Calu3 (cell line): ENCODE measurements at regions of chr18 and their contacts with region 1.

Region 1: DNA sequence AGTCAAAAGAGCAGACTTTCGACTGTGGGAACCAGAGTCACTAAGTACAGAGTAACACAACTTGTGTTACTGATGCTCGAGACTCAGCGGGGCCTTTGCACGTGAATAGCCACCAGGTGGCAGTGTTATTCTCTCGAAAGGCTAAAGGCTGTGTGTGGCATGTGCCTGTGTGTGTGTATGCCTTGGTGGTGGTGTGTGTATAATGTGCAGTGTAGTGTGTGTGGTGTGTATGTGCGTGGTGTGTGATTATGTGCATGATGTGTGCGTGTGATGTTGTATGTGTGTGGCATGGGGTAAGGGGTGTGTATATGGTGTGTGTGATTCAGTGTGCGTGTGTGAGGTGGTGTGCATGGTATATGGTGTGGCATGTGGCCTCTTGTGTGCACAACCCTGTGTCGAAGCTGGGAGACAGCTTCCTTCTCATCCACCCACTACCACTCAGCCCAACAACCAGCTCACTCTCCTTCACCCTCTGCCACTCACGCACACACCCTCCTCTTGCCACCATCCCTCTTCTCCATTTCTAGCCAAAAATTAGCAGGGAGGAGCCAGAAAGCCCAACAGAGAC is 83.0 kb upstream of the ZNF532 start:
- DNase-seq: peak; percentile 86
- H3K4me3 Mint-ChIP-seq: peak overlapping the region; percentile 3
- H3K27ac Mint-ChIP-seq: peak overlapping the region; percentile 67
- H3K4me1 Mint-ChIP-seq: peaks cover 51% of the 10 kb centered on the region
- H3K27me3 Mint-ChIP-seq: no peaks in the 10 kb centered on the region
- CTCF ChIP-seq: peak; percentile 96

Region 2: GRCh38 chr18:58748899-58749595 is 32.7 kb before region 1 on chr18:
- CTCF ChIA-PET with region 1: no interaction called
- intact Hi-C with region 1: no loop called
- DNase-seq: no peak
- H3K4me3 Mint-ChIP-seq: no peak overlapping the region
- H3K27ac Mint-ChIP-seq: no peak overlapping the region
- H3K4me1 Mint-ChIP-seq: no peaks in the 10 kb centered on the region
- H3K27me3 Mint-ChIP-seq: no peaks in the 10 kb centered on the region
- CTCF ChIP-seq: no peak

Region 3: DNA sequence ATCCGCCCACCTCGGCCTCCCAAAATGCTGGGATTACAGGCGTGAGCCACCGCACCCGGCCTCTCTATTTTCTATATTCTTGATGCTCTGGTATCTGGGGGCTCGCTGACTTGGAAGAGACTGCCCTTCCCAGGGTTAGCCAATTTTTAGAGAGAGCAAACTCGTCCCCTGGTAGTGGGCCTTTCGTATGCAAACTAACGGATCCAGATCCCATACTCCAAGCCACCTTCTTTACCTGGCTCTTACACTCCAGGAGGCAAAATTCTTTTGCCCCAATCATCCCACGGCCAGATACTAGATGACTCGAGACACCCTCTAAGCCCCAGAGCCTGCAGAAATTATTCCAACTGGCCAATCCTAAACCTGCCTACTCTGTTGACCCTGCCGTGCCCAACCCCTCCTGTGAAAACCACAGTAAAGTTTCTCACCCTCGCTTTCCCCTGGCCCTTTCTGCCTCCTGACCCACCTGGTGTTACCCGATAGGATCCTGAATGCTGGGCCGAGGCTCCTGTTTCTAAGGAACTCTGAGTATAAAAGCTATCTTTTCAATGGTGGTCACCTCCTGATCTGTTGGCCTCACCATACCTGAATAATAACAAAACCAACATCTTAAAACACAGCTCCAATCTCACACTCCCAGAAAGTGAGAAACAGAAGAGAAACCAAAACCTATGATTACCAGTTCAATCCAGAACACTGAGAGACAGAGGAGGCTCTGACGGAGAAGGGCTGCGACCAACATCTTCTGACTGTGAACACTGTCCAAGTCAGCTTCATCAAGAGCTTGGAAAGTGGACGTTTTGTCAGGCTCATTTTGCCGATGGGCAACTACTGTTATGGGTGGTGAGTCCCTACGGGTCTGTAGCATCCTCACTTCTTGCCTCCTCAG is 25.4 kb after region 1 on chr18:
- CTCF ChIA-PET with region 1: no interaction called
- intact Hi-C with region 1: no loop called
- DNase-seq: no peak
- H3K4me3 Mint-ChIP-seq: no peak overlapping the region
- H3K27ac Mint-ChIP-seq: no peak overlapping the region
- H3K4me1 Mint-ChIP-seq: peaks cover 11% of the 10 kb centered on the region
- H3K27me3 Mint-ChIP-seq: no peaks in the 10 kb centered on the region
- CTCF ChIP-seq: no peak

Region 4: DNA sequence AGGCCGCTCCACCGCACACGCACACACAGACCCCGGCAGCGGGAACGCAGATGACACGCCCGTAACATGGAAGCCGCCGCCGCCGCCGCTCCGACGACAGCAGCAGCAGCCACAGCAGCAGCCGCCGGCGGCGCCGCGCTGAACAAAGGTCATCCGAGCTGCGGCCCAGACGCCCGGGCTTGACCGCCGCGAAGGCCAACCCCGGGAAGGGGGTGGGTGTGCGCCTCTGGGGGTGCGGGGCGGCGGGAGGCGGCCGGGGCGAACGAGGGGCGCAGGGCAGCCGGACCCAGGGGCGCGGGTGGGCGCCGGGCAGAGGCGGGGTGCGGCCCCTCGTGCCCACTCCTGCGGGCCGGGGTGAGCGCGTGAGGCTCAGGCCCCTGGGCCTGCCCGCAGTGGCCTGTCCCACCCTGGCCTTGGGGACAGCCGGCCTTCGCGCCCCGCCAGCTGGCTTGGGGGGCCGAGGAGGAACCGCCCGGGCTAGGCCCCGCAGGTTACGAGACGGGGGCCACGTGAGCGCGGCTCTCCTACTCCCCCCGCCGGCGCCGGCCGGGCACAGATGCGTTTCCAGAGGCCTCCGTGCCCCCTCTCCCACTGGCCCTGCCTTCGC is 81.9 kb after region 1 on chr18:
- CTCF ChIA-PET with region 1: no interaction called
- intact Hi-C with region 1: loop called (anchors 1 kb)
- DNase-seq: peak; percentile 61
- H3K4me3 Mint-ChIP-seq: peak overlapping the region; percentile 73
- H3K27ac Mint-ChIP-seq: peak overlapping the region; percentile 98
- H3K4me1 Mint-ChIP-seq: peaks cover 76% of the 10 kb centered on the region
- H3K27me3 Mint-ChIP-seq: no peaks in the 10 kb centered on the region
- CTCF ChIP-seq: no peak

Region 5: DNA sequence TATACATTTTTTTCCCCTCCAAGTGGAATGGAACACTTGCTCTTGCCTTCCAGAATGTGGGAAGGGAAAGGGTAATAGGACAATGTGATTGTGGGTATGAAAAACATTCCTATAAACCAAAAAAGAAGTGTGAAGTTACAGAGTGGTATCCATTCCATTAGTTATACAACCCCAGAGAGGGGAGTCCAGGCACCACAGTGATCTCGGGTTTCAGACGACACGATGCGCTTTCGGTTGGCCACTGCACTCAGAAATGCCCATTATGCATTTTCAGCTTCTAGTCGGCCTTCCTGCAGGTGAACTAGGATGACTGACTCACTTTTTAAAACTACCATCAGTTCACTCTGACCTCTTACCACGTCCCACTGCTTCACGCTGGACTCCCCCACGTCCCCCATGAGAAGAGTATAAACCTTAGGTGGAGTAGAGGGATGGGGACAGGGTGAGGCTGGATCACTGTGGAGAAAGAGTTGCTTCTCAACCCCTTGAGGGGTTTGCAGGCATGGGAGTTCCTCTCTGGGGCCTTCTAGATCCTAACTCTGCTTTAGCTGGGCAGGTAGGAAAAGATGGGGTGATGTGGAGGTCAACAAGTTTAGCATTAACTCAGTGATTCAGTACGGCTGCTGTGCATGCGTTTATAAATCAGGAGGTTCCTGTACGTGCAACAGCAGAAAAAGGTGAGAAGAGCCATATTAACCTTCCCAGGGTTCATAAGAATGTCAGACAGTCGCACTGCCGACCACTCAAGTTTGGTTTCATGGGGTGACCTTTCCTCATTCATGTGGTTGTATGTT is 133.5 kb after region 1 on chr18:
- CTCF ChIA-PET with region 1: interaction called, 8 read pairs
- intact Hi-C with region 1: loop called (anchors 1 kb)
- DNase-seq: peak; percentile 71
- H3K4me3 Mint-ChIP-seq: peak overlapping the region; percentile 59
- H3K27ac Mint-ChIP-seq: peak overlapping the region; percentile 78
- H3K4me1 Mint-ChIP-seq: peaks cover 65% of the 10 kb centered on the region
- H3K27me3 Mint-ChIP-seq: no peaks in the 10 kb centered on the region
- CTCF ChIP-seq: no peak

Region 6: GRCh38 chr18:58998401-58999203 is 216.9 kb after region 1 on chr18:
- CTCF ChIA-PET with region 1: no interaction called
- intact Hi-C with region 1: loop called (anchors 10 kb)
- DNase-seq: no peak
- H3K4me3 Mint-ChIP-seq: no peak overlapping the region
- H3K27ac Mint-ChIP-seq: no peak overlapping the region
- H3K4me1 Mint-ChIP-seq: peaks cover 51% of the 10 kb centered on the region
- H3K27me3 Mint-ChIP-seq: no peaks in the 10 kb centered on the region
- CTCF ChIP-seq: no peak

Region 7: DNA sequence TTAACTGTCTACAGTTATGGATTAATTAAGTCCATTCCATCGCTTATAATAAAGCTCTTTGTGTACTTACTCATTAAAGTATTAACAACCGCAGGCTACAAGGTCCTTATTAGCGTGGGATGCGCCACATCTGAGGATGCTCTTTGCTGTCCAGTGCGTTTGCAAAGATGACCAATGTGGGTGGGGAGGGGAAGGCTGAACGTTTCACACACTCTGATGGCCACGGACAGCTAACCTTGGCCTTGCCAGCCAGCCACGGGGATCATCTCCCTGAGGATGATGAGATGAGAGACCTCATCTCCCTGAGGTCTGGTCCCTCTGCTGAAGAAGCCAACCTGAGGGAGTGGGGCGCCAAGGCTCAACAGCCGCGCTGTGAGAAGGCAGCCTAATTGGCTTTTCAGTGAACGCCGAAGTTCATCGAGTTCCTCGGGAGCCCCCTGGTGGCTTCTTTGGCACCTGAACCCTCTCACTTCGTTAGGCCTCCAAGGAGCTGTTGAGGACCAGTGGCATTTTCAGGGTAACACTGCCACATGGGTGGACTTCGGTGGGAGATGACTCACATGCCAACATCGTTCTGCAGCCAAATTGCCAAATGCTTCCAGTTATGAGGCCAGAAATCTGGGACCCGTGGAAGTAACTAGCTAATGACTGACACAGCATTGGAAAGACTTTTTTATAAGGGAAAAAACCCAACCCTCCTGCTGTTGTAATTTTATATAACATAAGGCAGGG is 288.6 kb after region 1 on chr18:
- CTCF ChIA-PET with region 1: interaction called, 8 read pairs
- intact Hi-C with region 1: loop called (anchors 1 kb)
- DNase-seq: peak; percentile 95
- H3K4me3 Mint-ChIP-seq: no peak overlapping the region
- H3K27ac Mint-ChIP-seq: no peak overlapping the region
- H3K4me1 Mint-ChIP-seq: peaks cover 30% of the 10 kb centered on the region
- H3K27me3 Mint-ChIP-seq: no peaks in the 10 kb centered on the region
- CTCF ChIP-seq: peak; percentile 94